ENCODE measurements at regions of chr17 and their contacts with region 1.

Region 1: DNA sequence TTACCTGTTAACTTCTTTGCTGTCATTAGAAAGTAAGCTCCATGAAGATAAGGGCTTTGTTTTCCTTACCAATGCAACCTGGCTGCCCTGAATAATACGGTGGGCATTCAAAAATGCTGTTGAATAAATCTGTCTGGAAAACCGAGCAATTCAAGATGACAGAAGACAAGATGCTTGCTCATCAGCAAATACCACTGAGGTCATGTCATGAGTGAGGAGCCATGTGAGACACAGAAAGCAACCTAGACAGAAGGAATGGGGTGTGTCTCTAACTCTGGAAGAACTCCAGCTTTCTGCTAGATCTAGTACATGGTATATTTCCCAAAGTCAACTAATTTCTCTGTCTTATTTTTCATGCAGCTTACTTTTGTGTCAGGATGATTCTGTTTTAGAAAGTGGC is 64.2 kb downstream of the STH start:
- DNase-seq: peak; percentile 80
- H3K4me3 Mint-ChIP-seq: no peak overlapping the region
- H3K27ac Mint-ChIP-seq: peak overlapping the region; percentile 75
- H3K4me1 Mint-ChIP-seq: peaks cover 14% of the 10 kb centered on the region
- H3K27me3 Mint-ChIP-seq: no peaks in the 10 kb centered on the region
- CTCF ChIP-seq: no peak

Region 2: GRCh38 chr17:45873728-45874127 is 189.5 kb before region 1 on chr17:
- CTCF ChIA-PET with region 1: no interaction called
- POLR2A ChIA-PET with region 1: no interaction called
- intact Hi-C with region 1: no loop called
- DNase-seq: no peak
- H3K4me3 Mint-ChIP-seq: no peak overlapping the region
- H3K27ac Mint-ChIP-seq: no peak overlapping the region
- H3K4me1 Mint-ChIP-seq: no peaks in the 10 kb centered on the region
- H3K27me3 Mint-ChIP-seq: peaks cover 59% of the 10 kb centered on the region
- CTCF ChIP-seq: no peak

Region 3: DNA sequence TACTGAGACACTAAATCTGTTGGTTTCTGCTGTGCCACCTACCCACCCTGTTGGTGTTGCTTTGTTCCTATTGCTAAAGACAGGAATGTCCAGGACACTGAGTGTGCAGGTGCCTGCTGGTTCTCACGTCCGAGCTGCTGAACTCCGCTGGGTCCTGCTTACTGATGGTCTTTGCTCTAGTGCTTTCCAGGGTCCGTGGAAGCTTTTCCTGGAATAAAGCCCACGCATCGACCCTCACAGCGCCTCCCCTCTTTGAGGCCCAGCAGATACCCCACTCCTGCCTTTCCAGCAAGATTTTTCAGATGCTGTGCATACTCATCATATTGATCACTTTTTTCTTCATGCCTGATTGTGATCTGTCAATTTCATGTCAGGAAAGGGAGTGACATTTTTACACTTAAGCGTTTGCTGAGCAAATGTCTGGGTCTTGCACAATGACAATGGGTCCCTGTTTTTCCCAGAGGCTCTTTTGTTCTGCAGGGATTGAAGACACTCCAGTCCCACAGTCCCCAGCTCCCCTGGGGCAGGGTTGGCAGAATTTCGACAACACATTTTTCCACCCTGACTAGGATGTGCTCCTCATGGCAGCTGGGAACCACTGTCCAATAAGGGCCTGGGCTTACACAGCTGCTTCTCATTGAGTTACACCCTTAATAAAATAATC is 49.6 kb before region 1 on chr17:
- CTCF ChIA-PET with region 1: no interaction called
- POLR2A ChIA-PET with region 1: no interaction called
- intact Hi-C with region 1: no loop called
- DNase-seq: peak; percentile 33
- H3K4me3 Mint-ChIP-seq: no peak overlapping the region
- H3K27ac Mint-ChIP-seq: no peak overlapping the region
- H3K4me1 Mint-ChIP-seq: peaks cover 8% of the 10 kb centered on the region
- H3K27me3 Mint-ChIP-seq: no peaks in the 10 kb centered on the region
- CTCF ChIP-seq: no peak

Region 4: DNA sequence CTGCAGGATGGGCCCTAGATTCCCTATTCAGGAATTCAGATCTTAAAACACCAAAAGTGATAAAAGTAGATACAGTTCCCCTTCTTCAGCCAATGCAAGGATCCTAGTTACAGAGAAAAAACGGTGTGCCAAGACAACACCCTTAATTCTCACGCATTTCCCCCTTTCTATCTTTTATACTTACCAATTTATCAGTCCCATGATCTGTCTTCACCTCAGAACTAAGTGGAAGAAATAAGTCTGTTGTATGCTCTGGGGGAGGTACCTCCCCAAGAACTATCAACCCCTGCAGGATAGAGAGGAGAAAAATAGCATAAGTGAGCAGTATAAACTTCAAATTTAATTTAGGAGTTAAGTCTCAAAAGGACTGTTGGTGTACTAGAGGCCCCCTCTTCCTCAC is 19.0 kb after region 1 on chr17:
- CTCF ChIA-PET with region 1: interaction called, 10 read pairs
- POLR2A ChIA-PET with region 1: interaction called, 8 read pairs
- intact Hi-C with region 1: no loop called
- DNase-seq: no peak
- H3K4me3 Mint-ChIP-seq: no peak overlapping the region
- H3K27ac Mint-ChIP-seq: no peak overlapping the region
- H3K4me1 Mint-ChIP-seq: peaks cover 29% of the 10 kb centered on the region
- H3K27me3 Mint-ChIP-seq: no peaks in the 10 kb centered on the region
- CTCF ChIP-seq: no peak